ENCODE measurements at regions of chr11 and their contacts with region 1.

Region 1: GRCh38 chr11:36492724-36493304 is 17.3 kb downstream of the TRAF6 start:
- DNase-seq: peak; percentile 44
- H3K4me3 Mint-ChIP-seq: no peak overlapping the region
- H3K27ac Mint-ChIP-seq: peak overlapping the region; percentile 28
- H3K4me1 Mint-ChIP-seq: peaks cover 22% of the 10 kb centered on the region
- H3K27me3 Mint-ChIP-seq: no peaks in the 10 kb centered on the region

Region 2: GRCh38 chr11:36041988-36042611 is 450.7 kb before region 1 on chr11:
- CTCF ChIA-PET with region 1: no interaction called
- intact Hi-C with region 1: loop called (anchors 5 kb)
- DNase-seq: no peak
- H3K4me3 Mint-ChIP-seq: no peak overlapping the region
- H3K27ac Mint-ChIP-seq: no peak overlapping the region
- H3K4me1 Mint-ChIP-seq: no peaks in the 10 kb centered on the region
- H3K27me3 Mint-ChIP-seq: peaks cover 15% of the 10 kb centered on the region

Region 3: GRCh38 chr11:36306888-36307287 is 185.9 kb before region 1 on chr11:
- CTCF ChIA-PET with region 1: interaction called, 9 read pairs
- intact Hi-C with region 1: loop called (anchors 2 kb)
- DNase-seq: peak; percentile 46
- H3K4me3 Mint-ChIP-seq: no peak overlapping the region
- H3K27ac Mint-ChIP-seq: no peak overlapping the region
- H3K4me1 Mint-ChIP-seq: no peaks in the 10 kb centered on the region
- H3K27me3 Mint-ChIP-seq: peaks cover 18% of the 10 kb centered on the region

Region 4: DNA sequence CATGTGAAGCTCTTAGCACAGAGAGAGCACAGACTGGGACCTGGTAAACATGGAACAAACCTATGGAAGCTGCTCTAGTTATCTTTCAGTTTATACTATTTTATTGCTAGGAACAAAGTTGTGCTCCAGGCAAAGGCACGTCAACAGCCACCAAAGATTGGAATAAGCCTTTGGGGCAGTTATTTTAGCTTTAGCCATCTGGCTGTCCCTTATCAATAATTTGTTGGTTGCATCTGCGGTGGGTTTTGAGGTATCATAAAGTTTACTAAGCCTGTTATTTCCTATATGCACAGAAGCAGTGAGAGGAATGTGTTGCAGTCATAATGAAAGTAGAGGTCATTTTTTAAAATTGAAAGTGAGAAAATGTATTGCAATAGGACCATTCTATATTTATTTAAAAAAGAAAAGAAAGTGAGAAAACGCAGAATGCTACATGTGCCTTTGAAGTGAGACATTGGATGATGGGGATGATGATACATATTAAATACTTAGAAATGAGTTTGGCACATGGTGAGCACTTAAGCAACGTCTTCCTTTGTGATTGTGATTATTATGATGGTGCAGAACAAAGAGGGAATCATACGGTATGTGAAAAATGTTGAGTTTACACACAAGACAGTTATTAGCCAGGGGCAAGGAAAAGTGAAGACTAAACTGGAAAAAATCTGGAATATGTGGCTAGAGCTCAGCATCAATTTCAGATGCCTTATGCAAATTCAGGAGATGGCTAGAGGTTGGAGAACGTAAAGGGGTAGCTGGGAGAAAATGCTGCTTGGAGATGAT is 138.4 kb before region 1 on chr11:
- CTCF ChIA-PET with region 1: interaction called, 6 read pairs
- intact Hi-C with region 1: loop called (anchors 1 kb)
- DNase-seq: no peak
- H3K4me3 Mint-ChIP-seq: no peak overlapping the region
- H3K27ac Mint-ChIP-seq: peak overlapping the region; percentile 16
- H3K4me1 Mint-ChIP-seq: peaks cover 49% of the 10 kb centered on the region
- H3K27me3 Mint-ChIP-seq: peaks cover 18% of the 10 kb centered on the region

Region 5: DNA sequence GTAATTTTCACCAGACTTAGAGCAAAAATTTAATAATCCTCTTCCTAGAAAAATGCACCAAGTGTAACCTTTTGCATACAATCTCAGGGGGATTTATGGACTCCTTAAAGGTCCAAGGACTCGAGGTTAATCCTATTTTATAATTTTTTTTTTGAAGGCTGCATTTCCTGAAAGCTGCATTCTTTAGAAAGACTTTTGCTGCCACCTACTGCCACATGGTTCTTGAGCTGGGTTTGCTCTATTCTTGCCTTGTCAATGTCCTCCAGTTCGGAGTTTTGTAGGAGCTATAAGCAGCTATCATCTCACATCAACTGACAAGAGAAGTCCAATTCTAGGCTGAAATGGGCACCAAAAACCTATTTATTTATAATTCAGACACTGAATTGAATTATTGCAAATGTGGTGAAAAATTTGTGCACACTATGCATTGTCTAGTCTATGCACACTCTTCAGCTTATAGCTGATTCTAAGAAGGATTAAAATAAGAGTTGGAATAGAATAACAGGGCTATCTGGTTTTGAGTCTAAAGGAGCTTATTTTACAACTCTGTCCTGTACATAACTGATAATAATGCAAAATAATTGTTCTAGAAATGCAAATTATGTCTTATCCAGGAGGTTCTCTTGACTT is 14.0 kb before region 1 on chr11:
- CTCF ChIA-PET with region 1: interaction called, 24 read pairs
- intact Hi-C with region 1: no loop called
- DNase-seq: peak; percentile 62
- H3K4me3 Mint-ChIP-seq: no peak overlapping the region
- H3K27ac Mint-ChIP-seq: no peak overlapping the region
- H3K4me1 Mint-ChIP-seq: peaks cover 2% of the 10 kb centered on the region
- H3K27me3 Mint-ChIP-seq: no peaks in the 10 kb centered on the region

Region 6: DNA sequence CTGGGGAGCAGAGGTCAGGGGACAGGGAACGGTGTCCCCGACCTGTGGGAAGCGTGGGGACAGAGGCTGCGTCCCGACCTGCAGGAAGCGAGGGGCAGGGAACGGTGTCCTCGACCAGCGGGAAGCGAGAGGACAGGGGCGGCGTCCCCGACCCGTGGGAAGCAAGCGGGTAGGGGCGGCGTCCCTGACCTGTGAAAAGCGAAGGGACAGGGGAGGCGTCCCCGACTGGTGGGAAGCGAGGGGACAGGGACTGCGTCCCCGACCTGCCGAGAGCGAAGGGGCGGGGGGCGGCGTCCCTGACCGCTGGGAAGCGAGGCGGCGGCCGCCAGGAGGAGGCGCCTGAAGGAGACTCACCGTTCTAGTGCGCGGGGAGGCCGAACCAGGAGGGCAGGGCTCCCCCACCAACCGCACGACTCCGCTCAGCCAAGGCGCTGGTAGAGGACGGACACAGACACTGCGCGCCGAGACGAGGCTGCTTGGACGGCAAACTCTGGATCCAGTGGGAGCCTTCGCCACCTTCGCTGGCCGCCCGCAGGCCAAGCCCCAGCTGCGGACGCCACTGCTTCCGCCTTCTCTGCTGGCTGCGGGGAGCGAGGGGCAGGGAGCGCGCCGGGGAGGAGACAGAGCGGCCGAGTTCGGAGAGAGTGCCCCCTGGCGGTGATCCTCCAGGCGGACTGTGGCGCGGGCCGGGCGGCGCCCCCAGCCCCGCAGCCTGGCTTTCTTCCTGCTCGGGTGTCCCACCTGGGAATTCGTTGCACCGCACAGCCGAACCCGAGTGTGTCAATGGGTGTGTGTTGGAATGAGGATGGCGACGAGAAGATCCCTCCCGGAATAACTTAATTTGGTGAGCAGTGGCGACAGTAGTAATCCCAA is 17.1 kb after region 1 on chr11 and contains the start of gene TRAF6:
- CTCF ChIA-PET with region 1: interaction called, 17 read pairs
- intact Hi-C with region 1: loop called (anchors 1 kb)
- DNase-seq: peak; percentile 91
- H3K4me3 Mint-ChIP-seq: peak within 1 kb of the TSS; percentile 97
- H3K27ac Mint-ChIP-seq: peak within 1 kb of the TSS; percentile 90
- H3K4me1 Mint-ChIP-seq: peaks cover 30% of the 10 kb centered on the region
- H3K27me3 Mint-ChIP-seq: no peaks in the 10 kb centered on the region
- total RNA-seq, gene TRAF6: 8.3 to 8.7 TPM